Caco-2 (cell line): ENCODE measurements at regions of chr6 and their contacts with region 1.

Region 1: GRCh38 chr6:81589461-81590323 is 162.8 kb downstream of the TENT5A start:
- DNase-seq: peak; percentile 49 to 59
- H3K4me3 ChIP-seq: no peak overlapping the region
- H3K4me3 Mint-ChIP-seq: no peak overlapping the region
- H3K27ac Mint-ChIP-seq: peak overlapping the region; percentile 29
- H3K4me1 ChIP-seq: peaks cover 22% of the 10 kb centered on the region
- H3K4me1 Mint-ChIP-seq: peaks cover 18% of the 10 kb centered on the region
- H3K27me3 ChIP-seq: no peaks in the 10 kb centered on the region
- H3K27me3 Mint-ChIP-seq: no peaks in the 10 kb centered on the region
- CTCF ChIP-seq: peak in 1 of 2 experiments; percentile 50

Region 2: GRCh38 chr6:81614292-81614691 is 24.6 kb after region 1 on chr6:
- CTCF ChIA-PET with region 1: no interaction called
- POLR2A ChIA-PET with region 1: no interaction called
- intact Hi-C with region 1: loop called (anchors 1 kb)
- DNase-seq: peak; percentile 67 to 72
- H3K4me3 ChIP-seq: no peak overlapping the region
- H3K4me3 Mint-ChIP-seq: peak overlapping the region; percentile 20
- H3K27ac Mint-ChIP-seq: peak overlapping the region; percentile 65
- H3K4me1 ChIP-seq: peaks cover 29% of the 10 kb centered on the region
- H3K4me1 Mint-ChIP-seq: peaks cover 22% of the 10 kb centered on the region
- H3K27me3 ChIP-seq: no peaks in the 10 kb centered on the region
- H3K27me3 Mint-ChIP-seq: no peaks in the 10 kb centered on the region
- CTCF ChIP-seq: no peak